Dendritic cell treated with granulocyte-macrophage colony-stimulating factor and Interleukin-4, amounts not matched to agents 40 ng/mL and 50 ng/mL, for 4 days (primary cell): ENCODE measurements at regions of chr1 and their contacts with region 1.

Region 1: GRCh38 chr1:48817505-48818114 is 40.9 kb upstream of the BEND5 start:
- H3K4me3 Mint-ChIP-seq: no peak overlapping the region
- H3K27ac Mint-ChIP-seq: no peak overlapping the region
- H3K4me1 Mint-ChIP-seq: no peaks in the 10 kb centered on the region
- H3K27me3 Mint-ChIP-seq: no peaks in the 10 kb centered on the region

Region 2: DNA sequence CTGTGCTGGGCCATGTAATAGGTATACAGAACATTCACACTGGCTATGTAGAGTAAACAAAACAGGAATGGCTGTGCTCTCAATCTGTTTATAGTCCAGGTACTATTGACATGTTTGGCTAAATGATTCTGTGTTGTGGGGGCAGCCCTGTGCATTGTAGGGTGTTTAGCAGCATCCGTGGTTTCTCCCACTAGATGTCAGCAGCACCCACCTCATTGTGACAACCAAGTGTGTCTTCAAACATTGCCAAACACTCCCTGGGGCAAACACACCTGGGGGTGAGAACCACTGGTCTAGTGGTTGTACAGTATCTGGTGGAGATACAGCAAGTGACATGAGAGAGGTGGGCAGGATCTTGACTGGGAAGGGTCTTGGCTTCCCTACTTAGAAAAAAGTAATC is 265.2 kb before region 1 on chr1:
- intact Hi-C with region 1: loop called (anchors 2 kb)
- H3K4me3 Mint-ChIP-seq: no peak overlapping the region
- H3K27ac Mint-ChIP-seq: no peak overlapping the region
- H3K4me1 Mint-ChIP-seq: peaks cover 10% of the 10 kb centered on the region
- H3K27me3 Mint-ChIP-seq: peaks cover 4% of the 10 kb centered on the region

Region 3: GRCh38 chr1:48677306-48678287 is 140.0 kb before region 1 on chr1:
- intact Hi-C with region 1: loop called (anchors 1 kb)
- H3K4me3 Mint-ChIP-seq: no peak overlapping the region
- H3K27ac Mint-ChIP-seq: no peak overlapping the region
- H3K4me1 Mint-ChIP-seq: peaks cover 17% of the 10 kb centered on the region
- H3K27me3 Mint-ChIP-seq: peaks cover 3% of the 10 kb centered on the region